GM10248 (cell line): ENCODE measurements at regions of chr1 and their contacts with region 1.

Region 1: GRCh38 chr1:10909697-10910671 is 102.5 kb upstream of the TARDBP start:
- DNase-seq: peak; percentile 81
- CTCF ChIP-seq: peak; percentile 42

Region 2: GRCh38 chr1:10888791-10889649 is 21.0 kb before region 1 on chr1:
- CTCF ChIA-PET with region 1: interaction called, 10 read pairs
- POLR2A ChIA-PET with region 1: no interaction called
- DNase-seq: no peak
- CTCF ChIP-seq: no peak